H1 (cell line): ENCODE measurements at regions of chr2 and their contacts with region 1.

Region 1: GRCh38 chr2:26745609-26746327 is 18.3 kb upstream of the SLC35F6 start:
- DNase-seq: peak in 1 of 2 experiments; percentile 90
- H3K4me3 ChIP-seq: no peak overlapping the region
- H3K27ac ChIP-seq: no peak overlapping the region
- H3K4me1 ChIP-seq: peaks cover 0 to under 1% (median under 1%) of the 10 kb centered on the region in 4 experiments; a peak in 4 of 7 replicates
- H3K27me3 ChIP-seq: peaks cover 0 to 5% (median 0%) of the 10 kb centered on the region in 4 experiments; a peak in 3 of 7 replicates
- CTCF ChIP-seq: peak; percentile 76 to 95 (median 91)
- EP300 ChIP-seq: no peak
- POLR2A ChIP-seq: no peak
- RAD21 ChIP-seq: peak; percentile 97 to 98

Region 2: GRCh38 chr2:26555246-26556133 is 190.3 kb before region 1 on chr2:
- CTCF ChIA-PET with region 1: interaction called, 14 read pairs
- POLR2A ChIA-PET with region 1: no interaction called
- DNase-seq: no peak
- H3K4me3 ChIP-seq: no peak overlapping the region
- H3K27ac ChIP-seq: no peak overlapping the region
- H3K4me1 ChIP-seq: peaks cover 0 to 19% (median 9%) of the 10 kb centered on the region in 4 experiments; a peak in 6 of 7 replicates
- H3K27me3 ChIP-seq: peaks cover 0 to 4% (median under 1%) of the 10 kb centered on the region in 4 experiments; a peak in 2 of 7 replicates
- CTCF ChIP-seq: peak; percentile 31 to 42 (median 34)
- EP300 ChIP-seq: no peak
- POLR2A ChIP-seq: no peak
- RAD21 ChIP-seq: peak; percentile 19 to 30; a peak in 3 of 4 replicates

Region 3: DNA sequence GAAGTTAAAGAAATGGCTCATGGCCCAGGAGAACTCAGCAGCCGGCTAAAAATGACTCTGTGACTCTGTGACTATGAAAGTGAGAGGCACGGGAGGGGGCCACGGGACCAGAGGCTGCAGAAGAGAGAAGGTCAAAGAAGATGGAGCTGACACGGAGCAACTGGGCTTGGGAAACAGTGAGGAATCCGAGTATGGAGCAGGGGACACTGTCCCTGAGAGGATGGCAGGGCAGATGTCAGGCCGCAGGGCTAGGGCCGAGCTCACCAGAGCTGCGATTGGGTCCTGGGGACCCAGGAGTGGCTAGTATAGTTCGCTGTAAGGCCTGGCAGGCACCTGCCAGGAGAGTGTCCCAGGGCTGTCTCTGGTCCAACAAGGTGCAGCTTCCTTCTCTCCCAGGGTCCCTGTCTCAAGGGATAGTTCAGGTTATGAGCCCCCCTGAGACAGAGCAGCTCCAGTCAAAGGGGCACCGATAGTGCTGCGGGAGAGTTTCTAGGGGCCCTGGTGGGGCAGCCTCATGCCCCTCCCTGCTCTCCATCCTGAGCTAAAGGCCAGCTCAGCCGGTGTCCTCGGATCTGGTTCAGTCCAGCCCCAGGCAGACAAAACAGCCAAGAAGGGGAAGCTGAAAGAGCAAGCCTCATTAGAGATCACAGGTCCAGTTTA is 147.3 kb before region 1 on chr2:
- CTCF ChIA-PET with region 1: interaction called, 367 read pairs
- POLR2A ChIA-PET with region 1: no interaction called
- DNase-seq: peak in 1 of 2 experiments; percentile 46
- H3K4me3 ChIP-seq: no peak overlapping the region
- H3K27ac ChIP-seq: no peak overlapping the region
- H3K4me1 ChIP-seq: peaks cover 0 to 4% (median 1%) of the 10 kb centered on the region in 4 experiments; a peak in 3 of 7 replicates
- H3K27me3 ChIP-seq: no peaks in the 10 kb centered on the region
- CTCF ChIP-seq: no peak
- EP300 ChIP-seq: no peak
- POLR2A ChIP-seq: no peak
- RAD21 ChIP-seq: no peak

Region 4: DNA sequence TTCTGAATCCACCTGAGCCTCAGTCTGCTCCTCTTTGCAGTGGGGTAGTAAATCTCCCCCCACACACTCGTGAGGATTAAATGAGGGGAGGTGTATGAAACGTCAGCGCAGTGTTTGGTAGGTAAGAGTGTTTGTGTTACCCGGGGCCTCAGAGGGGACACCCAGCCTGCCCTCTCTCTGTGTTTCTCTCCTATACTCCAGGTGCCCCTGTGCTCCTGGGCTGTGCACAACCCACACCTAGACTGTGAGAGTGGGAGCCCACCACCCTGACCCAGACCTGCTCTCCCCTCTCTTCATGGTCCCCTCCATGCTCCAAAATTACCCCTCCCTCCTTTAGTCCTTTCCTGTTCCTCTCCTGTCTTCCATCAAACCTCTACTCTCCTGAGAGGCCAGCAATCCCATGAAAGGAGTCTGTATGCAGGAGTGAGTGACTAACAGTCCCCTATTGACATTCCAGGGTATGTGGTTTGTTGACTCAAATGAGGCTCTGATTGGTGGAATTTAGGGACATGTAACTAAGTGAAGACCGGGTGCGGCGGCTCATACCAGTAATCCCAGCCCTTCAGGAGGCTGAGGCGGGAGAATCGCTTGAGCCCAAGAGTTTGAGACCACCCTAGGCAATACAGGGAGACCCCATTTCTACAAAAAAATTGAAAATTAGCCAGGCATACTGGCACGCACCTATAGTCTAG is 115.0 kb before region 1 on chr2:
- CTCF ChIA-PET with region 1: interaction called, 12 read pairs
- POLR2A ChIA-PET with region 1: no interaction called
- DNase-seq: no peak
- H3K4me3 ChIP-seq: no peak overlapping the region
- H3K27ac ChIP-seq: no peak overlapping the region
- H3K4me1 ChIP-seq: no peaks in the 10 kb centered on the region
- H3K27me3 ChIP-seq: no peaks in the 10 kb centered on the region; a peak in 1 of 7 replicates
- CTCF ChIP-seq: no peak
- EP300 ChIP-seq: no peak
- POLR2A ChIP-seq: no peak
- RAD21 ChIP-seq: no peak

Region 5: GRCh38 chr2:26679867-26680266 is 65.9 kb before region 1 on chr2:
- CTCF ChIA-PET with region 1: interaction called, 11 read pairs
- POLR2A ChIA-PET with region 1: no interaction called
- DNase-seq: no peak
- H3K4me3 ChIP-seq: no peak overlapping the region
- H3K27ac ChIP-seq: no peak overlapping the region
- H3K4me1 ChIP-seq: no peaks in the 10 kb centered on the region
- H3K27me3 ChIP-seq: no peaks in the 10 kb centered on the region; a peak in 2 of 7 replicates
- CTCF ChIP-seq: no peak
- EP300 ChIP-seq: no peak
- POLR2A ChIP-seq: no peak
- RAD21 ChIP-seq: no peak

Region 6: DNA sequence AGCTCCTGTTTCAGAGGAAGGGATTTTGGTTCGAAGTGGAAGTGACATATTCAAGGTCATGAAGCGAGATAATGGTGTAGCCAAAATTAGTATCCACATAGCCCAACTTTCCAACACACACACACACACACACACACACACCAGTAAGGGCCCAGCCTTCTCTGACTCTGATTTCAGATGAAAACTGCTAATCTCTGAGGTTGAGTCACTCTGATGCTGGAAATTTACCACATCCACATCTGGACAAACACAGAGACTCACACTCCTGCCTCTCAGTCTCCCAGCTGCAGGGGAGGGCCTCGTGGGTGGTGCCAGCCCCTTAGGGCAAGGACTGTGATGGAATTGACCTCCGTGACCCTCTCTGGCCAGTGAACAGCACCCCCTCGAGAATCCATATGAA is 10.7 kb before region 1 on chr2:
- CTCF ChIA-PET with region 1: interaction called, 67 read pairs
- POLR2A ChIA-PET with region 1: no interaction called
- DNase-seq: no peak
- H3K4me3 ChIP-seq: no peak overlapping the region
- H3K27ac ChIP-seq: no peak overlapping the region
- H3K4me1 ChIP-seq: no peaks in the 10 kb centered on the region
- H3K27me3 ChIP-seq: no peaks in the 10 kb centered on the region
- CTCF ChIP-seq: no peak
- EP300 ChIP-seq: no peak
- POLR2A ChIP-seq: no peak
- RAD21 ChIP-seq: no peak